Body of pancreas (tissue), 4 donors: ENCODE measurements at regions of chr2 and their contacts with region 1.

Region 1: GRCh38 chr2:16613539-16614011 is 52.1 kb downstream of the CYRIA start:
- DNase-seq: no peak
- ATAC-seq: no peak
- H3K4me3 ChIP-seq: no peak overlapping the region
- H3K27ac ChIP-seq: no peak overlapping the region
- H3K4me1 ChIP-seq: peaks cover 19% of the 10 kb centered on the region
- H3K27me3 ChIP-seq: no peaks in the 10 kb centered on the region
- CTCF ChIP-seq: peak; percentile 9 to 64 (median 46)
- POLR2A ChIP-seq: no peak

Region 2: GRCh38 chr2:16394072-16394985 is 219.2 kb before region 1 on chr2:
- intact Hi-C with region 1: no loop called
- DNase-seq: peak in 3 of 4 donors; percentile 30 to 50 (median 43)
- ATAC-seq: peak; percentile 55
- H3K4me3 ChIP-seq: no peak overlapping the region
- H3K27ac ChIP-seq: no peak overlapping the region
- H3K4me1 ChIP-seq: peaks cover 16% of the 10 kb centered on the region
- H3K27me3 ChIP-seq: no peaks in the 10 kb centered on the region
- CTCF ChIP-seq: no peak
- POLR2A ChIP-seq: no peak

Region 3: GRCh38 chr2:16553226-16553625 is 60.3 kb before region 1 on chr2:
- intact Hi-C with region 1: no loop called
- DNase-seq: peak; percentile 28 to 50 (median 38)
- ATAC-seq: no peak
- H3K4me3 ChIP-seq: no peak overlapping the region
- H3K27ac ChIP-seq: no peak overlapping the region
- H3K4me1 ChIP-seq: no peaks in the 10 kb centered on the region
- H3K27me3 ChIP-seq: no peaks in the 10 kb centered on the region
- CTCF ChIP-seq: peak; percentile 20 to 59 (median 55)
- POLR2A ChIP-seq: no peak

Region 4: GRCh38 chr2:16750175-16750924 is 136.8 kb after region 1 on chr2:
- intact Hi-C with region 1: loop called (anchors 5 kb)
- DNase-seq: no peak
- ATAC-seq: no peak
- H3K4me3 ChIP-seq: no peak overlapping the region
- H3K27ac ChIP-seq: no peak overlapping the region
- H3K4me1 ChIP-seq: no peaks in the 10 kb centered on the region
- H3K27me3 ChIP-seq: no peaks in the 10 kb centered on the region
- CTCF ChIP-seq: no peak
- POLR2A ChIP-seq: no peak

Region 5: DNA sequence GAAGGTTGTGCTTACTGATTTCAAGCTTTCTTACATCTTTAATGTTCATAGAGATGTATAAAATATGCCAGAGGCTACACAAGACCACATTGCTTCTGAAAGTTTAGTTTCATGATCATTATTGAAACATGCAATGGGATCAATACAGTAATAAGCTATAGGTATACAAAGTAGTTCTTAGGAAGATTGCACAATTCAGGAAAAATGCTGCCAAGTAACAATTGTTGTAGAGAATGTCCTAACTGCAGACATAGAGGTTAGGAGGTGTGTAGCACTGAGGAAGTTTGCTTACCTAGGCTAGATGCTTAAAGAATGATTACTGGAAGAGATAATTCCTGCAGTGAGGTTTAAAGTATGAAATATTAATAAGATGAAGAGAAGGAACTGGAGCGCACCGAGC is 311.6 kb after region 1 on chr2:
- intact Hi-C with region 1: no loop called
- DNase-seq: no peak
- ATAC-seq: no peak
- H3K4me3 ChIP-seq: no peak overlapping the region
- H3K27ac ChIP-seq: no peak overlapping the region
- H3K4me1 ChIP-seq: no peaks in the 10 kb centered on the region
- H3K27me3 ChIP-seq: no peaks in the 10 kb centered on the region
- CTCF ChIP-seq: no peak
- POLR2A ChIP-seq: no peak